ENCODE measurements at regions of chr1 and their contacts with region 1.

Region 1: DNA sequence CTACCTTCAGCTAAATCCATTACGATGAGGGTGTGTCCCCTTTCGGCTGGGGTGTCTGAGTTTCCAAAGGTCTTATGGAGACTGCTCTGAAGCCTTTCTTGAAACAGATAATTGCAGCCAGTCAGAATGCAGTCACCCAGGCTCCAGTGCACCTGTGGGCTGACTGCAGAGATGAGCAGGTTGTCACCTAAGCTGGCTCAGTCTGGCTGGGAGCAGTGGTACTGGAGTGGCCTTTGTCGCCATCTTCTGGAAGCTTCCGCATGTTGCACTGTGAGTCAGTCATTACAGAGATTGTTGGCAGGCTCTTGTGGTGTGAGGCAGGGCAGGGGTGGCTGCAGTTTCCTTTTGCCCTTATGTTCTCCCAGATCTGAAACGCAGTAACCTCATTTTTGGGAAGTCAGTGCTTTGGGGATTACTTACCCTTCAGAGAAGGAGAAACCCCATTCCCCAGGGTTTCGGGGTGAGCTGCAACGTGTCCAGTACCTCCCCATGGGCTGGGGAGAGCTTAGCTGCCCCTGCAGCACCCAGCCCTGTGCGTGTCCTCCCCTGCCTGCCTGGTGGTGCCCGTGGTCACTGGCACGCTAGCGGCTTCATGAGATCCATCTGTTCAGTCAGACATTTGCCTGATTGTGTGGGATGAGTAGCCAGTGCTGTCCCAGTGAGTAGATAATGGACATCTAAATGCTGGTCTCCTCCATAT is 48.0 kb downstream of the SMYD2 start:
- DNase-seq: peak; percentile 77
- H3K4me3 ChIP-seq: no peak overlapping the region
- H3K27ac ChIP-seq: no peak overlapping the region
- H3K4me1 ChIP-seq: no peaks in the 10 kb centered on the region
- H3K27me3 ChIP-seq: no peaks in the 10 kb centered on the region
- CTCF ChIP-seq: peak; percentile 84

Region 2: GRCh38 chr1:214213136-214213535 is 115.8 kb before region 1 on chr1:
- intact Hi-C with region 1: loop called (anchors 2 kb)
- DNase-seq: no peak
- H3K4me3 ChIP-seq: no peak overlapping the region
- H3K27ac ChIP-seq: no peak overlapping the region
- H3K4me1 ChIP-seq: no peaks in the 10 kb centered on the region
- H3K27me3 ChIP-seq: no peaks in the 10 kb centered on the region
- CTCF ChIP-seq: no peak

Region 3: GRCh38 chr1:214261206-214262123 is 67.5 kb before region 1 on chr1:
- intact Hi-C with region 1: loop called (anchors 2 kb)
- DNase-seq: peak; percentile 83
- H3K4me3 ChIP-seq: no peak overlapping the region
- H3K27ac ChIP-seq: no peak overlapping the region
- H3K4me1 ChIP-seq: no peaks in the 10 kb centered on the region
- H3K27me3 ChIP-seq: no peaks in the 10 kb centered on the region
- CTCF ChIP-seq: peak; percentile 96

Region 4: DNA sequence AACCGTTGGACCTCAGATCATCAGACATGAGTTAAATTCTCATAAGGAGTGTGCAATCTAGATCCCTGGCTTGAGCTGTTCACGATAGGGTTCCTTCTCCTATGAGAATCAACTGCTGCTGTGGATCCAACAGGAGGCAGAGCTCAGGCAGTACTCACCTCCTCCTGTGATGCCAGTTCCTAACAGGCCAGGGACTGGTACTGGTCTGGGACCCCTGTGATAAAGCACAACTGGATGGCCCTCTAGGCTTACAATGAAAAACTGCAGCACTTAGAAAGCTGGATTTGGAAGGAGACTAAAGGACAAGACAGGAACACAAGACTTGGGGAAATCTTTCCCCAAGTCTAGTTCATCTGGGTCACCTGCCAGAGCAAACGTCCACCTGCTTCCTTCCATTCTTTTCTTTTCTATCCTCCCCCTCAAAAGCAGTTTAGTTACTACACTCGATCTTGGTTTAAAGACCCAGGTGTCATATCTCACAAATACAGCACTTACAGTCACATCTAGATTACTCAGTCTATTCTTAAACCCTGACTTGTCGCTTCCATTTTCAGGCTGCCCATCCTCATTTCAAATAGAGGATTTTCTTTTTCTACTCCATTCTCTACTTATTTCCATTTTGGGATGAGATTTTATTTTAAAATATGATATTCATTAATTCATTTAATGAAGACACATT is 162.7 kb after region 1 on chr1:
- intact Hi-C with region 1: no loop called
- DNase-seq: no peak
- H3K4me3 ChIP-seq: no peak overlapping the region
- H3K27ac ChIP-seq: no peak overlapping the region
- H3K4me1 ChIP-seq: no peaks in the 10 kb centered on the region
- H3K27me3 ChIP-seq: no peaks in the 10 kb centered on the region
- CTCF ChIP-seq: no peak

Measured in colonic mucosa (tissue), 4 donors.